Activated naive CD4-positive, alpha-beta T cell treated with anti-CD3 and anti-CD28 coated beads, Interleukin-2, amount 10 ng/mL, durations not matched to agents 7 days and 5 days (primary cell): ENCODE measurements at regions of chr12 and their contacts with region 1.

Region 1: GRCh38 chr12:47111392-47111778 is 31.6 kb upstream of the AMIGO2 start:
- DNase-seq: peak; percentile 30
- H3K4me3 Mint-ChIP-seq: no peak overlapping the region
- H3K27ac Mint-ChIP-seq: peak overlapping the region; percentile 74
- H3K4me1 Mint-ChIP-seq: peaks cover 29% of the 10 kb centered on the region
- H3K27me3 Mint-ChIP-seq: no peaks in the 10 kb centered on the region

Region 2: DNA sequence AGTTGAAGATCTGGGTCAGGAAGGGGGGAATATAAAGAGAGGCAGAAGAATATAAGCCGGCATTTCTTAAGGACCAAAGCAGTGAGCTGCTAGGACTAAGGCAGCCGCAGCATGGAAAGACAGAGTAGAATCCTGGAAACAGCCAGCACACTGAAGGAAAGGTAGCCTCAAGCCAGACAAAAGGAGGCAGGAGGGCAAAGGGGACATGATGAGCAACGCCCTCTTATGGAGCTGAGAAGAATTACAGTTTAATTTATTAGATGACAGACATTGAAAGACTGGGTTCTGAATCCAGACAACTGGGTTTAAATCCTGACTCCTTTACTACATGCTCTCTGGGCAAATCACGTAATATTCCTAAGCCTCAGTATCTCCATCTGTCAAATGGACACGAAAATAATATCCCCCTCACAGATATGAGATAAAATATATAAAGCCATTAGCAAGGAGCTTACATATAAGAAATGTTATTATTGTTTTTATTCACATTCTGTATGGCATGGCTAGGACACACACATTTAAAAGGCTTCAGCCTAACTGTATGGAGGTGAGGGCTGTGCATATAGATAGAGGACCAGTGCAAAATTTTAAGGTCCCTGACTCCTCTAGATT is 40.0 kb before region 1 on chr12:
- CTCF ChIA-PET with region 1: interaction called, 15 read pairs
- DNase-seq: no peak
- H3K4me3 Mint-ChIP-seq: no peak overlapping the region
- H3K27ac Mint-ChIP-seq: no peak overlapping the region
- H3K4me1 Mint-ChIP-seq: peaks cover under 1% of the 10 kb centered on the region
- H3K27me3 Mint-ChIP-seq: no peaks in the 10 kb centered on the region

Region 3: GRCh38 chr12:47156167-47156736 is 44.9 kb after region 1 on chr12:
- CTCF ChIA-PET with region 1: no interaction called
- DNase-seq: no peak
- H3K4me3 Mint-ChIP-seq: no peak overlapping the region
- H3K27ac Mint-ChIP-seq: peak overlapping the region; percentile 3
- H3K4me1 Mint-ChIP-seq: peaks cover 17% of the 10 kb centered on the region
- H3K27me3 Mint-ChIP-seq: no peaks in the 10 kb centered on the region